ENCODE measurements at regions of chr2 and their contacts with region 1.

Region 1: DNA sequence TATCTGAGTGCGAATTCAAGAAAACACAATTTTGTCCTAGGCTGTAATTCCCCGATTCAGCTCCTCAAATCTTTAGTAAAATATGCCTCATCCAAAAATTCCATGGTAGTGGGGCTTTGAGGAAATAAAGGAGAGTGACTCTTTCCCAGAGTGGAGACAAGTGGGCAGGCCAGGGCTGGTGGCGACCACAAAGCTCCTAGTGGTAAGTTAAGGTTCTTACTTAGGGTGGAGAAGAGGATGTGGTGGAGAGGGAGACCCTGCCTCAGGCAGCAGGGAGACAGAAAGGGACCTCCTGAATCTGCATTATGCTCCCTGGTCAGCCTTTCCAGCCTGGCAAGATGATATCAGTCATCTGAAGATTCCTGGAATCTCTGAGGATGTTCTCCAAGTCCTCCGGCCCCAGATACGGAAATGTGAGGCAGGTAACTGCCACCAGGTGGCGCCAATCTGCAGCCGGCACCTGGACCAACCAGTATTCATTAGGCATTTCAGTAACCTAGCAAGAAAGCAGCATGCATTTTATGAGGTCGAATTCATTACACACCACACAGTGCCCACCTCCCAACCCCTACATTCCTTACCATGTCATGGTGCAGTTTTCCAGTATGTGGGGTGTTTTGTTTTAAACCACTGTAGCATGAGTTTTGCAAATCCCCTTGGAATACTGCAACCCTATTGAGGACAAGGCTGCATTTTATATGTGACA is 106.4 kb downstream of the POLE4 start:
- DNase-seq: peak; percentile 59
- H3K4me3 Mint-ChIP-seq: no peak overlapping the region
- H3K27ac Mint-ChIP-seq: no peak overlapping the region
- H3K4me1 Mint-ChIP-seq: no peaks in the 10 kb centered on the region
- H3K27me3 Mint-ChIP-seq: no peaks in the 10 kb centered on the region

Region 2: GRCh38 chr2:74919827-74920226 is 145.0 kb before region 1 on chr2:
- CTCF ChIA-PET with region 1: interaction called, 13 read pairs
- DNase-seq: peak; percentile 78
- H3K4me3 Mint-ChIP-seq: peak overlapping the region; percentile 27
- H3K27ac Mint-ChIP-seq: no peak overlapping the region
- H3K4me1 Mint-ChIP-seq: peaks cover 12% of the 10 kb centered on the region
- H3K27me3 Mint-ChIP-seq: peaks cover 48% of the 10 kb centered on the region

Region 3: DNA sequence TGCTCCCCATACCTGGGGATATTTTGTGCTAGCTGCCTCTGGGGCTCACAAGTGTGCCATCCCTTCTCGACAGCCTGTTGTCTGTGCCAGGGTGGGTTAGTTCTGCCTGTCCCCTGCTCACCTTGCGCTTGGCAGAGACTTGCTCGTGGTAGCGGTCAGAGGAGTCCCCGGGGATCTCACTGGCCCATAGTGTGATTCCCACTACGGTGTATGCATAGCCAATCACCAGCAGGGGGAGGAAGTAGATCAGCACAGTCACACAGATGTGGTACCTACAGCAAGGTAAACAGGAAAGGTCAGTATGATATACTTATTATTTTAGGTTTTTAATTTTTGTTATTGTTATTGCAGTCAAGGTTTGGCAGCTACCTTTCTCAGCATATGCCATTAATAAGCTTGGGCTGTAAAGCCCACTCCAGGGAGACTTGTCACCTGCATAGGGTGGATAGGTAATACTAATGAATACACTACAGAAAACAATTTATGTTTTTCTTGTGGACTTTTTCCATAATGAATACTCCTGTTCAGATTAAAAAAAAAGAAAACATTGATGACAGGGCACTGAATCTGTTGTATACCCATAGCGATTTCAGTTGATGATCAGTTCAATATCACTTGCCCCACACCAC is 11.2 kb before region 1 on chr2:
- CTCF ChIA-PET with region 1: interaction called, 13 read pairs
- DNase-seq: peak; percentile 24
- H3K4me3 Mint-ChIP-seq: no peak overlapping the region
- H3K27ac Mint-ChIP-seq: no peak overlapping the region
- H3K4me1 Mint-ChIP-seq: no peaks in the 10 kb centered on the region
- H3K27me3 Mint-ChIP-seq: no peaks in the 10 kb centered on the region

Region 4: DNA sequence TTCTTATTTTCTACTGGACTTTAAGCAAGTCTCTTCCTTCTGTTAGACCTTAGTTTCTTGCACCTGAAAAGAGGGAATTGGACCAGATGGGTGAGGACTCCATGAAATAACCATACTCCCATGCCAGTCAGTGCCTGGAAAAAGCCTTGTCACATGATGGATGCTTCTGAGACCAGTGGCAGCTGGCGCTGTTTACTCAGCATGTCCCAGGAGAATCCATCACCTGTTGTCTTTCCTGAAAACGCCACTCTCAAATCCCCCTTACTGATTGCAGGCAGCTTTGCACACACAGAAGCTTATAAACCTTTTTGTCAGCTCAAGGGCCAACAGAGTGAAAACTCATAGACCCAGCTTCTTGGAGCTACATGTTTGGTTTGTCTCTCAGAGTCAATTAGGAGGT is 11.2 kb after region 1 on chr2:
- CTCF ChIA-PET with region 1: interaction called, 24 read pairs
- DNase-seq: no peak
- H3K4me3 Mint-ChIP-seq: no peak overlapping the region
- H3K27ac Mint-ChIP-seq: no peak overlapping the region
- H3K4me1 Mint-ChIP-seq: no peaks in the 10 kb centered on the region
- H3K27me3 Mint-ChIP-seq: no peaks in the 10 kb centered on the region

Region 5: GRCh38 chr2:75403991-75404428 is 339.2 kb after region 1 on chr2:
- CTCF ChIA-PET with region 1: interaction called, 11 read pairs
- DNase-seq: no peak
- H3K4me3 Mint-ChIP-seq: no peak overlapping the region
- H3K27ac Mint-ChIP-seq: no peak overlapping the region
- H3K4me1 Mint-ChIP-seq: no peaks in the 10 kb centered on the region
- H3K27me3 Mint-ChIP-seq: no peaks in the 10 kb centered on the region